ENCODE measurements at regions of chr4 and their contacts with region 1.

Region 1: DNA sequence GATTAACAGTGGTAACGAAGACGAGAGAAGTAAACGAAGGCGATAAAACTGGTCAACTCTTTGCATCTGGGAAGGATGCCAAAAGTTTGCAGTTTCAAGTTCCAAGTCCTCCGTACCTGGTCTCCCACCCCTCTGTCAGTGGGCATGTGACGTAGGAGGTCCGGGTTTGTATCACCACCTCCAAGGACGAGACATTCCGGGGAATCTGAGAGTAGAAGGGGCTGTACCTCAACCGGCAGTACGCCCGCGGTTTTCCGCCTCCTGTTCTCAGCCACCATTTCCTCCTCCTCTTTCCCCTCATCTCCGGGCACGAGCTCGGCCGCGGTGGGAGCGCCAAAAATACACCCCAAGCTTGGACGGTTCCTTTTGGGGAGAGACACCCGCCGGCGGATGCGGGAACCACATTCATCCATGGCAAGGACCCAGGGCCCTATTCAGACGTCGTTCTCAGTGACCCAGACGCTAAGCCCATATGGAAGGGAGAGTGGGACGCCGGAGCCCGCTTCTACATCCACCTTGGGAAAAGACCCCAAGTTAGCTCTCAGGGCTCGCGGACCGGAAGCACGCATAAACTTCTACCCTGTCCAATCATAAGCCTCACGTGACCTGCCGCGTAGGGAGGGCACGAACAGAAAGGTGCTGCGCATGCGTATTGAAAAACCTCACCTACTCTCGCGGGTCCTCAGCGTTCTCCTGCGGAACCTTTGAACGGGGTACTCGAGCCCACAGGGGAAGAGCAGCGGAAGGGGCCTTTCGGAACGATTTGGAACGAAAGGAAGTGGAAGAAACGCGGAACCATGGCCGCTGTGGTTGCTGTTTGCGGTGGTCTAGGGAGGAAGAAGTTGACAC is at the starts of genes HELQ and MRPS18C:
- DNase-seq: peak; percentile 98
- H3K4me3 Mint-ChIP-seq: peak within 1 kb of the TSS; percentile 100
- H3K27ac Mint-ChIP-seq: peak within 1 kb of the TSS; percentile 100
- H3K4me1 Mint-ChIP-seq: peaks cover 44% of the 10 kb centered on the region
- H3K27me3 Mint-ChIP-seq: no peaks in the 10 kb centered on the region
- total RNA-seq, gene HELQ: 7.9 to 10.9 TPM
- total RNA-seq, gene MRPS18C: 67.2 to 69.9 TPM

Region 2: GRCh38 chr4:82373816-82374625 is 1081.5 kb before region 1 on chr4 and contains the start of gene HNRNPD:
- CTCF ChIA-PET with region 1: no interaction called
- intact Hi-C with region 1: loop called (anchors 1 kb)
- DNase-seq: peak; percentile 96
- H3K4me3 Mint-ChIP-seq: peak within 1 kb of the TSS; percentile 95
- H3K27ac Mint-ChIP-seq: peak within 1 kb of the TSS; percentile 95
- H3K4me1 Mint-ChIP-seq: peaks cover 33% of the 10 kb centered on the region
- H3K27me3 Mint-ChIP-seq: no peaks in the 10 kb centered on the region
- total RNA-seq, gene HNRNPD: 340 to 367 TPM

Region 3: DNA sequence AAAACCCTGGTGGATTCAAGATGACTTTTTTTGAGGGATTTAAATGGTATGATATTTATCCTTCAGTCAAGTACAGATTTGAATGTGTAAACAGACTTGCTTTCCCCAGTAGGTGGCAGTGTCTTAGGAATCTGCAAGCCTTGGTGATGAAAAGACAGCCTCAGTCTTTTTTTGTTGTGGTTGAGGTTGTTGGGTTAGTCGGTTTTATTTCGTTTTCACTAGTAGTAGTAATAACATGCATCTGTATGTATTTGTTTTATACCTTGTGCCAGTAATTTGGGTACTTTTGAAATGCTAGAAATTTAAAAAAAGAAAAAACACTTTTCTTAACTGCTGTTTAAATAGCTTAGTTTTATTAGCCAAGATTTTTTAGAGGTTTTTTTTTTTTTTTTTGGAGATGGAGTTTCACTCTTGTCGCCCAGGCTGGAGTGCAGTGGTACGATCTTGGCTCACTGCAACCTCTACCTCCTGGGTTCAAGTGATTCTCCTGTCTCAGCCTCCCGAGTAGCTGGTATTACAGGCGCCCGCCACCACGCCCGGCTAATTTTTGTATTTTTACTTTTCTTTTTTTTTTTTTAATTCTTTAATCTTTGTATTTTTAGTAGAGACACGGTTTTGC is 381.3 kb before region 1 on chr4:
- CTCF ChIA-PET with region 1: no interaction called
- intact Hi-C with region 1: loop called (anchors 1 kb)
- DNase-seq: peak; percentile 76
- H3K4me3 Mint-ChIP-seq: no peak overlapping the region
- H3K27ac Mint-ChIP-seq: no peak overlapping the region
- H3K4me1 Mint-ChIP-seq: peaks cover 13% of the 10 kb centered on the region
- H3K27me3 Mint-ChIP-seq: no peaks in the 10 kb centered on the region

Region 4: GRCh38 chr4:83348074-83348473 is 107.4 kb before region 1 on chr4:
- CTCF ChIA-PET with region 1: no interaction called
- intact Hi-C with region 1: loop called (anchors 1 kb)
- DNase-seq: no peak
- H3K4me3 Mint-ChIP-seq: no peak overlapping the region
- H3K27ac Mint-ChIP-seq: no peak overlapping the region
- H3K4me1 Mint-ChIP-seq: peaks cover 20% of the 10 kb centered on the region
- H3K27me3 Mint-ChIP-seq: no peaks in the 10 kb centered on the region

Region 5: DNA sequence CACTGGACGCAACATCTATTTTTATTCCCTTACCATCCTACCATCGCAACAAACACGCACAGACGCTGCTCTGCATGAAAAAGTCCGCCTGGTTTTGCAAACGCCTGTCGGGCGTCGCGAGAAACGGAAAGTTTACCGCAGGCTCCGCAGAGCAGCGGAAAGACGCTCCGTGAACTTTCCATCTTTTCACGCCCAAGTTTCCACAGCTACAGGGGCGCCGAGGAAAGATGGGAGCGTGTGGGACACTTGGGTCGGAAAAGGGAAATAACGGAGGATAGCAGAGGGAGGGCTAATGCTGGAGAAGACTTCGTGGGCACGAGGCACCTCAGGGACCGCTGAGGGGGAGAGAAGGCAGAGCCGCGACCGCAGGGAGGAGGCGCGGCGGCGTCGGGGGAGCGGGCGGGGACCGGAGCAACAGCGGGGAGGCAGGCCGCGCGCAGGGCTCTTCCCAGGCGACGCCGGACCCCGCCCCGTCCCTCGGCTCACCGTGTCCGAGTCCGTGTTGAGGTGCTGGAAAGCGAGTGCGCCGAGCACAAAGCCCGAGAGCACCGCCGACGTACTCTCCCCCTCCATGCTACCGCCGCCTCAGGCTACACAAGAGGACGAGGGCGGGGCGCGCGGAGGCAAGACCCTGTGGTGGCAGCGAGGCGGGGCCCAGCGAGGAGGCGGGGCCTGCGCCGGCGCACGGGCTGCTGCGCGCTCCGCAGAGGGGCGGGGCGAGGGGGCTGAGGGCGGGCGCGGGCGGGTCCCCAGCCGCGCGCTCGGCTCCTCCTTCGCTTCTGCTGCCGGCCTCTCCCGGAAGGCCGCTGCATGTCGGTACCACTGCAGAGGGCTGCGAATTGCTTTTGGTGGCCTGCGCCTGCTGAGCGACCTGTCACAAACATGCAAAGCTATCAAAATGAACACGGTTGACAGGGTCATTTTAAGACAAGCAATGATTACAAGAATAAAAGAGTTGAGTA is 29.3 kb after region 1 on chr4 and contains the start of gene ABRAXAS1:
- CTCF ChIA-PET with region 1: no interaction called
- intact Hi-C with region 1: loop called (anchors 1 kb)
- DNase-seq: peak; percentile 92
- H3K4me3 Mint-ChIP-seq: peak within 1 kb of the TSS; percentile 99
- H3K27ac Mint-ChIP-seq: peak within 1 kb of the TSS; percentile 91
- H3K4me1 Mint-ChIP-seq: peaks cover 19% of the 10 kb centered on the region
- H3K27me3 Mint-ChIP-seq: no peaks in the 10 kb centered on the region
- total RNA-seq, gene ABRAXAS1: 19.7 to 20.9 TPM

Region 6: DNA sequence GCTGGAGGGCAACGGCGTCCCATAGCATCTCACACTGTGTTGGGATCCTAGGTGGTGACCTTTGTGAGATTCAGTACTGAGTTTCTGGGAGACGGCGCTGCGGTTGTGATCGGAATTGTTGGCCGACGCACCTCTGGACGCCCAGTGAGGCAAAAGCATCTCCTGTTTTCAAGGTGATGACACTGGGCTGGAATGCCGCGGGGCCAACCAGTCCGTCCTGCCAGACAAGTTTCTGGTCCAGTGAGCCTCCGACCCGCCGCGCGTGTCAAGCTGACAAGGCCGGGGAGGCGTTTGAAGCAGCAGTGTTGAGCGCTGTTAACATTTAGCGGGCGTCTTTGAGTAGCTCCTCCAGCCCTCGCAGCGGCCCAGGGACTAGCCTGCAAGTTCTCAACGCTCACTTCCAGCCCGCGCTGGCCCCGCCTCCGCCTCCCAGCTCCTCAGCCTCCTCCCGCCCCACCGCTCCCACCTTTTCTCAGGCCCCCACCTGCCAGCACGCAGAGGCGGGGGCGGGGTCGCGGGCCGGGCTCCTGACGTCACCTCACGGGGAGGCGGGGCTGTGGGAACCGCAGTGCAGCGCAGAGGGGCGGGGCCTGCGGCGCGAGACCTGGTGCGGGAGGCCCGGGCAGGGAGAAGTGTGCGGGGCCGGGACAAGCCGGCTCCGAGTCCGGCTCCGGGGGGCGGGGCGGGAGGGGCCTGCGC is 1126.9 kb after region 1 on chr4:
- CTCF ChIA-PET with region 1: no interaction called
- intact Hi-C with region 1: loop called (anchors 2 kb)
- DNase-seq: peak; percentile 95
- H3K4me3 Mint-ChIP-seq: peak overlapping the region; percentile 69
- H3K27ac Mint-ChIP-seq: no peak overlapping the region
- H3K4me1 Mint-ChIP-seq: peaks cover 12% of the 10 kb centered on the region
- H3K27me3 Mint-ChIP-seq: peaks cover 34% of the 10 kb centered on the region

Measured in activated naive CD4-positive, alpha-beta T cell treated with anti-CD3 and anti-CD28 coated beads for 36 hours (primary cell).